Activated CD4-positive, alpha-beta memory T cell treated with anti-CD3 and anti-CD28 coated beads for 36 hours (primary cell): ENCODE measurements at regions of chr6 and their contacts with region 1.

Region 1: DNA sequence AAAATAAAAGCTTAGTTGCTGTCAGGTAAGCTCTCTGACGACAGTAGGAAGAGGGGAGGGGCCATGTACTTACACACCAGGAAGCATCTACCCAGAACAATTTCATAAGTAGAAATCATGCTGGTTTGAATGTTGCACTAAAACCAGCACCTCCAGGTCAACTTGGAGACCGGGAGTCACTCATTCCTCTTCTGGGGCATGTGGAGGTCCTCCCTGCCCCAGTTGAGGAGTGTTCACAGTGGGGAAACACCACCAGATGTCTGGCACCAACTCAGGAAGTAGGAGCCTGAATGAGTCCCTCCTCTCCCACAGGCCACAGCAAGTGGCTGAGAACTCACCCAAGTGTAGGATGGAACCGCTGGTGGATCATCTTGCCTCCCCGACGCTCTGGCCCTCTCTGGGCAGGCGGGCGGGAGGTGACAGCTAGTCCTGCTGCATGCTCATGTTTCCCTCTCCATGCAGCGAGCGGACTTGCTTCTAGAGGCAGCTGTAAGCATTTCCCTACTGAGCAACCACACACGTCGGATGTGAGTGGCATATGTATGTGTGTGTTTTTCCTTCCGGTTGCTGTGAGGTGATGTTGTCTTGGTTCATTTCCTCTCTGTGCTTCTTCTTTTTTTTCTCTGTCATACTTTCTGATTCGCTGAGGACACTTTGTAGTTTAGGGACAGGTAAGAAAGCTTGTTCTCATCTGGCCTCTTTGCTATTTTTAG is 149.5 kb upstream of the NEDD9 start:
- DNase-seq: peak; percentile 82
- H3K4me3 Mint-ChIP-seq: peak overlapping the region; percentile 85
- H3K27ac Mint-ChIP-seq: peak overlapping the region; percentile 95
- H3K4me1 Mint-ChIP-seq: peaks cover 58% of the 10 kb centered on the region
- H3K27me3 Mint-ChIP-seq: no peaks in the 10 kb centered on the region

Region 2: DNA sequence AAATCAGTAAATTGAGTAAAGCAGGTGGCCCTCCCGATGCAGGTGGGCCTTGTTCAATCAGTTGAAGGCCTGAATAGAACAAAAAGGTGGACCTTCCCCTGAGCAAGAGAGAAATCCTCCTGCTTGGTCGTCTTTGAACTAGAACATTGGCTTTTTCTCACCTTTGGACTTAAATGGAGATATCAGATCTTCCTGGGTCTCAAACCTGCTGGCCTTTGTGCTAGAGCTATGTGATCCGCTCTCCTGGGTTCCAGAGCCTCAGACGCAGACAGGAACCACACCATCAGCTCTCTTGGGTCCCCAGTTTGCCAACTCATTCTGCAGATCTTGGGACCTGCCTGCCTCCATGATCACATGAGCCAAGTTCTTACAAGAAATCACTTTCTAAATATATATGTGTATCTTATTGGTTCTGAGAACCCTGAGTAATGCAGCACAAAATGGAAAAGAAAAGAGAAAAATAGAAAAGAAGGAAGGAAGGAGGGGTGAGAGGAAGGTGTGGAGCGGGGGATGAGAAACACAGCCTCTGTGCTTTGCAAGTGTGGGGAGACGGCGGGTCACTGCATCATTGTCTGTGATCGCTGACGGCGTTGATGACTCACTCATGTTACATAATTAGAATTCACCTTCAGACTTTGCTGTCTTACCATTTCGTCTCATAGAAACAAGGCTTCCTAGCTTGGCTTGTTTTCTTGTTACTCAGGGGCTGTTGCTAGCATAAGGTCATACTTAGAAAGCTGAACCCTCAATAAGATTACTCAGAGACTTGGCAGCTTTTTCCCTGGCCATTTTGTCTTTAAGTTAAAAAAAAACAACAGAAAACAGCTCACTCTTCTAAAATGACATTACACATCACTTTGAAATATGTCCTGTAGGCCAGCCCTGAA is 63.8 kb before region 1 on chr6:
- CTCF ChIA-PET with region 1: interaction called, 3 read pairs
- POLR2A ChIA-PET with region 1: interaction called, 3 read pairs
- intact Hi-C with region 1: loop called (anchors 1 kb)
- DNase-seq: peak; percentile 88
- H3K4me3 Mint-ChIP-seq: peak overlapping the region; percentile 14
- H3K27ac Mint-ChIP-seq: peak overlapping the region; percentile 92
- H3K4me1 Mint-ChIP-seq: peaks cover 63% of the 10 kb centered on the region
- H3K27me3 Mint-ChIP-seq: no peaks in the 10 kb centered on the region

Region 3: DNA sequence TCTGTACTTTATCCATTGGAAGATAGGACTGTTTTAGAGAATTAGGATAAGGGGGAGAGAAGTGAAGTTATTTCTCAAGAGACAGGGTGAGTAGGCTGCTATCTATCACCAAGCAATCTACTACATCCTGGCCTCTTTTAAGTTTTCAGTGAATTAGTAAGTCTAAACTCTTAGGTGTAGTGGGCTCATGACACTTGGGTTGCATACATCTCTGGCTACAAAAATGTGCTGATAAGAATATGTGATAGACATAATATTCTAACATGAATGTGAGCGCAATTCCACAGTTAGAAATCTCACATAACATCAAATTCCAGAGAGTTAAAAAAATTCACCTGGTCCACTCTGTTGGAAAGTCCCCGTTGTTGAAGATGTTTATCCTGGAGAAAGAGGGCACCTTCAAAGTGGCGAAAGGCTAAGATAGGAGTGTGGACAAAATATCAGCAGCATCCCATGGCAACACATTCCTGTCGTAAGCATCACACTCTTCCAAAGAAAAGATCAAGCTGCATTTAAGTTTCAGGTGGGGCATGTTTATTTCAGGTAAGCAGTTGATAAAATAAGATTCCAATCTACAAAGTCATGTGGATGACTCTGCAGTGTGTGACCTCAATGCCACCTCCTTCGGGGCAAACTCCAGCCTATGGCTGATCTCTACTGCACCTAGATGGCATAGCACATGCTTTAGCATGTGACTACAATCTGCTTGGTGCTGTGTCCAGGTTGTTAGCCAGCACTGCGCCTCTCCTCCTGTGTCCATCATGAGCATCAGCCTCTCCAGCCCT is 37.8 kb before region 1 on chr6:
- CTCF ChIA-PET with region 1: interaction called, 3 read pairs
- POLR2A ChIA-PET with region 1: interaction called, 3 read pairs
- intact Hi-C with region 1: loop called (anchors 2 kb)
- DNase-seq: no peak
- H3K4me3 Mint-ChIP-seq: no peak overlapping the region
- H3K27ac Mint-ChIP-seq: peak overlapping the region; percentile 61
- H3K4me1 Mint-ChIP-seq: peaks cover 78% of the 10 kb centered on the region
- H3K27me3 Mint-ChIP-seq: no peaks in the 10 kb centered on the region